Prostate gland (tissue), 2 donors: ENCODE measurements at regions of chr14 and their contacts with region 1.

Region 1: GRCh38 chr14:93040443-93040842 is 75.3 kb downstream of the ITPK1 start:
- DNase-seq: no peak
- H3K4me3 ChIP-seq: no peak overlapping the region
- H3K27ac ChIP-seq: peak overlapping the region; percentile 66 to 68
- H3K4me1 ChIP-seq: peaks cover 26% of the 10 kb centered on the region
- H3K27me3 ChIP-seq: no peaks in the 10 kb centered on the region
- CTCF ChIP-seq: no peak
- POLR2A ChIP-seq: no peak

Region 2: GRCh38 chr14:92973261-92973797 is 67.1 kb before region 1 on chr14:
- intact Hi-C with region 1: loop called (anchors 2 kb)
- DNase-seq: peak; percentile 86
- H3K4me3 ChIP-seq: no peak overlapping the region
- H3K27ac ChIP-seq: peak overlapping the region; percentile 59 to 70
- H3K4me1 ChIP-seq: peaks cover 17% of the 10 kb centered on the region
- H3K27me3 ChIP-seq: no peaks in the 10 kb centered on the region
- CTCF ChIP-seq: peak; percentile 60 to 95 (median 85)
- POLR2A ChIP-seq: no peak